Calu3 (cell line): ENCODE measurements at regions of chr16 and their contacts with region 1.

Region 1: DNA sequence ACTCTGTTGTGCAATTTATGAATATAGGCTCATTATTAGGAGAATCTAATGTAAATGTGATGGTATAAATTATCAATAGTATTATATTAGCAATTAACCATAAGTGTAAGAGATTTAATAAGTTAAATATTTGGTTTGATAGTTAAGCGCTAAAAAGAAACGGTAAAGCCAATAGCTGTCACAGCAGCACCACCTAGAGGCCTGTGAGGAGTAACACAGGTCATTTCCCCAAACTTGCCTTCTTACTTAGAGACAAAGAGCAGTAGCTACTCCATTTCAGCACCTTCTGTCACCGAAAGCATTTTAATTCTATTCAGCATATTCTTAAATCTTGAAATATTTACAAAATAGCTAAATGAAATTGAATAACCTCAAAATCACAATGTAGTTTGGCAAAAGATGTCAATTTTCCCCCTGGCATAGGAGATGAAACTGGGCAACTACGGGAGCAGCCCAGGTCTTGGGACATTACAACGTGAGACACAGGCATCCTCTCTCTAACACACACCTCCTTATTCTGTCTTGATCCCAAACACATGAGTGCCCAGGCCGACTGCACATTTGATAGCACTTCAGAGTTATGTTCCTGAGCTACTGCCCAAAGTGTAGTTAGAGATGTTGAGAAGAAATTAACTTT is 14.2 kb upstream of the DYNLRB2 start:
- DNase-seq: peak; percentile 71
- H3K4me3 Mint-ChIP-seq: no peak overlapping the region
- H3K27ac Mint-ChIP-seq: no peak overlapping the region
- H3K4me1 Mint-ChIP-seq: no peaks in the 10 kb centered on the region
- H3K27me3 Mint-ChIP-seq: no peaks in the 10 kb centered on the region
- CTCF ChIP-seq: peak; percentile 73

Region 2: GRCh38 chr16:80006241-80007215 is 520.0 kb before region 1 on chr16:
- CTCF ChIA-PET with region 1: no interaction called
- intact Hi-C with region 1: loop called (anchors 10 kb)
- DNase-seq: no peak
- H3K4me3 Mint-ChIP-seq: no peak overlapping the region
- H3K27ac Mint-ChIP-seq: no peak overlapping the region
- H3K4me1 Mint-ChIP-seq: peaks cover 9% of the 10 kb centered on the region
- H3K27me3 Mint-ChIP-seq: peaks cover 17% of the 10 kb centered on the region
- CTCF ChIP-seq: no peak

Region 3: GRCh38 chr16:80330803-80331202 is 195.7 kb before region 1 on chr16:
- CTCF ChIA-PET with region 1: no interaction called
- intact Hi-C with region 1: no loop called
- DNase-seq: no peak
- H3K4me3 Mint-ChIP-seq: no peak overlapping the region
- H3K27ac Mint-ChIP-seq: no peak overlapping the region
- H3K4me1 Mint-ChIP-seq: no peaks in the 10 kb centered on the region
- H3K27me3 Mint-ChIP-seq: peaks cover 34% of the 10 kb centered on the region
- CTCF ChIP-seq: no peak

Region 4: DNA sequence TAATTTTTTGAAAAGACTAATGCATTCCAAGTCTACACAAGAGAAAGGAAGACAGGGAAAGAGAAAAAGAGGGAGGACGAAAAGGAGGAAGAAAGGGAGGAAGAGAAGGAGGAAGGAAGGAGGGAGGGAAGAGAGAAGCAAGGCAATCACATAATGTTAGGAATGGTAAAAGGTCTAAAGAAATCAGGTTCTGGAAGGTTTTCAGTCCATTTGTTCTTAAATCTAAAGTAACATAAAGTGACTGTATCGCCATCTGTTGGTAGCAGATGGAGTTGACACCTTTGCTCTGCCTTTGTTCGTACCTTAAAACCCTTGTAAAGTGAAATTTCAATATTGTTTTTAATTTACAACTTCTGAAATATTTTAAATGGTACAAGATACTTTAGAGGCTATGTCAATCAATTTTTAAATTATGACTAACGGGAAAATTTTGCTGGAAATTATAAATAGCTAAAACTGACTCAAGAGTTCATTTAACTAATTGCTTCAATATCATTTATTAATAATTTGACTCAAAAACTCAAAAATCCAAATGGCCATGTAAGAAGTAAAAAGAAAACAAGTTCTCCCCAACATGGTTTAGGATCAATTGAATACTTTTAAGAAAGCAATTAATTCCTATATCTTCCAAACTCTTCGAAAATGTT is 298.3 kb after region 1 on chr16:
- CTCF ChIA-PET with region 1: interaction called, 3 read pairs
- intact Hi-C with region 1: loop called (anchors 1 kb)
- DNase-seq: peak; percentile 30
- H3K4me3 Mint-ChIP-seq: no peak overlapping the region
- H3K27ac Mint-ChIP-seq: no peak overlapping the region
- H3K4me1 Mint-ChIP-seq: no peaks in the 10 kb centered on the region
- H3K27me3 Mint-ChIP-seq: peaks cover 15% of the 10 kb centered on the region
- CTCF ChIP-seq: peak; percentile 83

Region 5: DNA sequence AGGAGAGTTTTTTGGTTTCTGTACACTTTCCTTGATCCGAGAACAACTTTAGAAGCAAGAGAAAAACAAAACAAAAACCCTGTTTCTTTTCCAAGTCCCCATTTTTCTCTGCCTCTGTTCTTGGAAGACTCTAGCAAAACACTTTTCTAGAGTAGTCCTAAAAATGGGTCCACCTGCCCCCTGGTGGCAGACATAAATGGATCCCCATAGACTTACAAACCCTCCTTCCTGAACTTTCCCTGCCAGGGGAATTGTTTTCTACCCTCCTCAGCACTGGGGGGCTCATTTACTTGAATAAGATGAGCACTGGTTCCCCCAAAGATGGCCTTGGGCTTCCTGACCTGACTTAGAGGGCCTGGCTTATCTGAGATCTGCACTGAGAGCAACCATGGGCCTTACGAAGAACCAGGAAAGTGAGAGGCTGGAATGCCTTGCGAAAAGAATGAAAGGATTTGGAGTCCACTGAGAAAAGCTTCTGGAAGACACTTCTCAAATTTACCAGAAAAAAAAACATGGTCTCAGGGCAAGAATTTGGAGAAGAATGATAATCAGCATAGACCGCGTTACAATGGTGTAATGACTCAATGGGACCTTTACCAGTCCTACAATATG is 325.8 kb after region 1 on chr16:
- CTCF ChIA-PET with region 1: no interaction called
- intact Hi-C with region 1: loop called (anchors 1 kb)
- DNase-seq: peak; percentile 46
- H3K4me3 Mint-ChIP-seq: no peak overlapping the region
- H3K27ac Mint-ChIP-seq: no peak overlapping the region
- H3K4me1 Mint-ChIP-seq: no peaks in the 10 kb centered on the region
- H3K27me3 Mint-ChIP-seq: peaks cover 34% of the 10 kb centered on the region
- CTCF ChIP-seq: peak; percentile 71